ENCODE measurements at regions of chrX and their contacts with region 1.

Region 1: DNA sequence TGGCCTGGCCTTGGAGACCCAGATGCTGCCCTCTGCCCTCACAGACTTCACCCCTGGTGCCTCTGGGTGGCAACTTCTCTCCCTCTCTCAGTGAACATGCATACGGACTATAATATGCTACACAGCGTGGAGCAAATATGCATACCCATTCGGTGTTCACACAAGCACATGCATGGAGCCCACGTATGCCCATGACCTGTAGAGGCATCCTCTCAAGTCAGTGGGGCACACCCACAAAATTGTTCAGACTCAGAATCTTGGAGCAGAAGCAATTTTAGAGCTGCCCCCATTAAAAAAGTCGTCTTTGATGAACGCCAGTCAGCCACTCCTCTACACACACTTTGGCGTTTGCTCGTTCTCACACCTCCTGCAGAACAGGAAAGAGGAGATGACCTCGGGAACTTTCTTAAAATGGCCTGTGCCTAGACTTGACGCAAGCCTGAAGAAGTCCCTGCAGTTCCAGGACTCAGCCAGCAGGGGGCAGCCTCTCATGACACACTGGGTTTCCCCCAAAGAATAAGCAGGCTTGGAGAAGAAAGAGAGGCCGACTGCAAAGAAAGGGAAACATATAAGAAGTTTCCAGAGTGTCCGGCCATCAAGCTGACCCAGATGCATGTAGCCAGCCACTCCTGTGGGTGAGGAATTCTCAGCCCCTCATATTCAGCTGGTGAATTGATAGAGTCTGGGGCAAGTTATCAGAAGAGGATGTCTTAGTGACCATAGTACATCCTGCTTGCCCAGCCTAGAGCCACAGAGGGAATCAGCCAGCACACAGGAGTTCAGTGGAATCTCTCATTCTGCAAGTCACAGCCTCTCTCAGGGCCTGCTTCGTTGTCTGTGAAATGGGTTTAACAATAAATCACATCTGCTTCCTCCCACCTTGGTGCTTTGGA is 17.3 kb downstream of the APLN start:
- DNase-seq: peak; percentile 90
- H3K4me3 Mint-ChIP-seq: no peak overlapping the region
- H3K27ac Mint-ChIP-seq: no peak overlapping the region
- H3K4me1 Mint-ChIP-seq: peaks cover 5% of the 10 kb centered on the region
- H3K27me3 Mint-ChIP-seq: no peaks in the 10 kb centered on the region

Region 2: GRCh38 chrX:129823115-129823514 is 185.7 kb after region 1 on chrX:
- intact Hi-C with region 1: loop called (anchors 1 kb)
- DNase-seq: peak; percentile 83
- H3K4me3 Mint-ChIP-seq: no peak overlapping the region
- H3K27ac Mint-ChIP-seq: no peak overlapping the region
- H3K4me1 Mint-ChIP-seq: peaks cover 10% of the 10 kb centered on the region
- H3K27me3 Mint-ChIP-seq: no peaks in the 10 kb centered on the region